ENCODE measurements at regions of chr7 and their contacts with region 1.

Region 1: DNA sequence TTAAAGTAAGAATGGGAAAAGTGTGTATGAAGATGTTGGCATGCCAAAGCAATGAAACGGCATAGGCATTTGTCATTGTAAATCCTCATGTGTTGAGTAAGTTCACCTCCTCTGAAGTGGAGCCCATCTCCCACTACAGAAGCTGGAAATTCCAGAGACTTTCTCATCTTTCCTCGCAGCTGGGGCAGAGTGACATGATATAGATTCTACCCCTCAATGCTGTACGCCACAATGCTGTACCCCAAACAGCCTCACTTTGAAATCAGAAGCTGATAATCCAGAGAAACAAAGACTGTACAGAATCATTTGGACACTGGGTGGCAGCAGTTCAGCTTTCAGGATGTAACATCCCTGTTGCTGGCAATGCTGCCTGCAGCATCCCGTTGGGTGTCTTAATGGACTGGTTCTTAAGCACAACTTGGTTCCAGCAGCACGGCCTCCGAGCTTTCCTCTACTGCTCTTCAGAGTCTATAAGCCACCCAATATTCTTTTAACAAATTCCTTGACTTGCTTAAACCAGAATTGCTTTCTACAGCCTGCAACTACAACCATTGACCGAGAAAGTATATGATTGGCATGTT is 18.8 kb downstream of the ZC3HAV1L start:
- DNase-seq: peak; percentile 15 to 80 (median 55)
- ATAC-seq: peak; percentile 81 to 98 (median 88)
- H3K4me3 ChIP-seq: no peak overlapping the region
- H3K4me3 Mint-ChIP-seq: no peak overlapping the region
- H3K27ac ChIP-seq: no peak overlapping the region
- H3K27ac Mint-ChIP-seq: no peak overlapping the region
- H3K4me1 ChIP-seq: no peaks in the 10 kb centered on the region
- H3K4me1 Mint-ChIP-seq: peaks cover 6 to 17% (median 9%) of the 10 kb centered on the region in 3 donors
- H3K27me3 ChIP-seq: peaks cover 0 to 6% of the 10 kb centered on the region in 2 experiments
- H3K27me3 Mint-ChIP-seq: peaks cover 0 to 9% of the 10 kb centered on the region in 2 donors

Region 2: DNA sequence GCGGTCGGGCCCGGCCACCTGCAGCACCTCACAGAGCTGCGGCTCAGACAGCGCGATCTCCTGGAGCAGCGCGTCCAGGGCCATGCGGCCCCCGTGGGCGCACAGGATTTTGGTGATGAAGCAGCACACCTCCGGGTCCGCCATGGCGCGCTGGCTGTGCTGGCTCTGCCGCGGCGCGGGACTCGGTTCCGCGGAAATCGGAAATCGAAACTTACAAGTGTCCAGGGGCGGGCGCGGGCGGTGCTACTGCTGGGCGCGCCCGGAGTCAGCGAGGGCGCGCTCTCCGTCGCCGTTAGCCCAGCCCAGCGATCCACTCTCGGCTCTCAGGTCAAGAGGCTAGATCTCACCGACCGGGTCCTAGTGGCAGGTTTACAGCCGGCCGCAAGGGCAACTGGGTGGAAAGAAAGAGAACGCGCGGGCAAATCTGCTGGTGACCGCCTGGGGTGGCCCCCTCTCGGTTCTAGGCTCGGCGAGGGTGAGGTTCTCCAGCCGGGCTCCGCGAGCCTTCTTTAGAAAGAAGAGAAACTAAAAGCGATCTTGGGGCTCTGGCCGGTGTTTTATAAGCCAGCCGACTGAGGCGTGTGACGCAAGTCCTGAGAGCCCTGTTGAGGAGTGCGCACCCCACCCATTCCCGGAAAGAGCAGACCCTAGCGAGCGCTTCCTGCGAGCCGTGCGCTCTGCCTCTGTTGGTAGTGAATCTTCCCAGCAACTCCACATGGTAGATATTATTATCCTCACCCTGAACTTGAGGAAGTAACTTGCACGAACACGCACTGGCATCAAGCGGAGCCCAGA is 92.4 kb after region 1 on chr7 and contains the start of gene ZC3HAV1:
- CTCF ChIA-PET with region 1: interaction called, 3 to 11 read pairs
- POLR2A ChIA-PET with region 1: no interaction called
- DNase-seq: peak; percentile 66 to 95 (median 89)
- ATAC-seq: peak; percentile 85 to 89 (median 86)
- H3K4me3 ChIP-seq: peak within 1 kb of the TSS; percentile 88 to 100
- H3K4me3 Mint-ChIP-seq: peak within 1 kb of the TSS; percentile 98 to 99 (median 98)
- H3K27ac ChIP-seq: peak within 1 kb of the TSS; percentile 93
- H3K27ac Mint-ChIP-seq: peak within 1 kb of the TSS; percentile 98
- H3K4me1 ChIP-seq: peaks cover 4 to 18% of the 10 kb centered on the region in 2 experiments
- H3K4me1 Mint-ChIP-seq: peaks cover 36 to 46% (median 45%) of the 10 kb centered on the region in 3 donors
- H3K27me3 ChIP-seq: no peaks in the 10 kb centered on the region
- H3K27me3 Mint-ChIP-seq: no peaks in the 10 kb centered on the region
- total RNA-seq, gene ZC3HAV1: 148 to 201 (median 155) TPM

Region 3: GRCh38 chr7:139124084-139124914 is 107.3 kb after region 1 on chr7:
- CTCF ChIA-PET with region 1: interaction called, 14 to 32 read pairs
- POLR2A ChIA-PET with region 1: interaction called in 1 of 2 experiments, 3 read pairs
- DNase-seq: no peak
- ATAC-seq: no peak
- H3K4me3 ChIP-seq: no peak overlapping the region
- H3K4me3 Mint-ChIP-seq: no peak overlapping the region
- H3K27ac ChIP-seq: no peak overlapping the region
- H3K27ac Mint-ChIP-seq: no peak overlapping the region
- H3K4me1 ChIP-seq: peaks cover 2 to 4% of the 10 kb centered on the region in 2 experiments
- H3K4me1 Mint-ChIP-seq: peaks cover 7 to 31% (median 18%) of the 10 kb centered on the region in 3 donors
- H3K27me3 ChIP-seq: no peaks in the 10 kb centered on the region
- H3K27me3 Mint-ChIP-seq: no peaks in the 10 kb centered on the region

Measured in T-cell (primary cell).